ENCODE measurements at regions of chr17 and their contacts with region 1.

Region 1: GRCh38 chr17:35596530-35597233 is 9.6 kb downstream of the AP2B1 start:
- DNase-seq: no peak
- ATAC-seq: peak in 2 of 4 donors; percentile 26 to 66
- H3K4me3 ChIP-seq: no peak overlapping the region
- H3K27ac ChIP-seq: no peak overlapping the region
- H3K4me1 ChIP-seq: peaks cover 0 to 26% (median 6%) of the 10 kb centered on the region in 12 donors
- H3K27me3 ChIP-seq: no peaks in the 10 kb centered on the region
- CTCF ChIP-seq: peak in 2 of 12 donors; percentile 8
- POLR2A ChIP-seq: no peak

Region 2: DNA sequence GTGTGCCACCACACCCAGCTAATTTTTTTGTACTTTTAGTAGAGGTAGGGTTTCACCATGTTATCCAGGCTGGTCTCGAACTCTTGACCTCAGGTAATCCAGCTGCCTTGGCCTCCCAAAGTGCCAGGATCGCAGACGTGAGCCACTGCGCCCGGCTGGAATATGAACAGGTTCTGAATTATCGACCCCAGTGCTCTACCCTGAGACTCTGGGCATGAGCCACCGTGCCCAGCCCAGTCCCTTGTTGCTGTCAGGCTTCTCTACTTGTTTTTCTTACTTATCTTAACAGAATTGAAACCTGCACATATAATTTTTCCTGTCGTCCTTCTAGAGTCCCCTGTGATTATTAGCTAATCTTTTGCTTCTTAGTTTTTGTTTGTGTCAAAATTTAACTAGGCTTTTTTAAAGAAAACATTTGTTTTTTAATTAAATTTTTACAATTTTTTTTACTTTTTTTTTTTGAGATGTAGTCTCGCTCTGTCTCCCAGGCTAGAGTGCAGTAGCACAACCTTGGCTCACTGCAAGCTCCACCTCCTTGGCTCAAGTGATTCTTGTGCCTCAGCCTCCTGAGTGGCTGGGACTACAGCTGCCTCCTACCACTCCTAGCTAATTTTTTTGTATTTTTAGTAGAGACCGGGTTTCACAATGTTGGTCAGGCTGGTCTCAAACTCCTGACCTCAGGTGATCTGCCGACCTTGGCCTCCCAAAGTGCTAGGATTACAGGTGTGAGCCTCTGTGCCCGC is 57.1 kb after region 1 on chr17:
- intact Hi-C with region 1: loop called in 1 of 10 experiments (anchors 10 kb)
- DNase-seq: no peak
- ATAC-seq: no peak
- H3K4me3 ChIP-seq: no peak overlapping the region
- H3K27ac ChIP-seq: no peak overlapping the region
- H3K4me1 ChIP-seq: no peaks in the 10 kb centered on the region
- H3K27me3 ChIP-seq: no peaks in the 10 kb centered on the region
- CTCF ChIP-seq: no peak
- POLR2A ChIP-seq: no peak

Region 3: DNA sequence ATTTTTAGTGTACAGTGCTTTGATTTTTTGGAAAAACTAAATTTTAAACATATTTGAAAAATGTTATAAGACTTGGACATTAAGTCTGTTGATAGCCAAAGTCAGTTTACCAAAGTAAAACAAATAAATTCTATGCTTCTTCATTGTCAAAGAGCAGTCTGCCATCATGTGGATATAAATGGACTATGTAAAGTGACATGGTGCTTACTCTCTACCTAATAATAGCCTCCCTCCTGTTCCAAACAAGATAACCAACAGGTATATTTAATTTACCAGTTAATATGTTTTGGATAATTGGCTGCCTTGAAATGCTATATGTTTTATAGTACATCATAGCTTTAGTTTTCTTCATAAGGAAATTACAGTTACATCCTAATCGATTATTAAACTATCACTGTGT is 228.5 kb after region 1 on chr17:
- intact Hi-C with region 1: loop called in 1 of 10 experiments (anchors 10 kb)
- DNase-seq: no peak
- ATAC-seq: peak in 1 of 4 donors; percentile 65
- H3K4me3 ChIP-seq: no peak overlapping the region
- H3K27ac ChIP-seq: peak overlapping the region in 1 of 12 donors; percentile 2
- H3K4me1 ChIP-seq: peaks cover 0 to 5% (median 0%) of the 10 kb centered on the region in 12 donors
- H3K27me3 ChIP-seq: no peaks in the 10 kb centered on the region
- CTCF ChIP-seq: no peak
- POLR2A ChIP-seq: no peak